AG04449 (cell line): ENCODE measurements at regions of chr6 and their contacts with region 1.

Region 1: DNA sequence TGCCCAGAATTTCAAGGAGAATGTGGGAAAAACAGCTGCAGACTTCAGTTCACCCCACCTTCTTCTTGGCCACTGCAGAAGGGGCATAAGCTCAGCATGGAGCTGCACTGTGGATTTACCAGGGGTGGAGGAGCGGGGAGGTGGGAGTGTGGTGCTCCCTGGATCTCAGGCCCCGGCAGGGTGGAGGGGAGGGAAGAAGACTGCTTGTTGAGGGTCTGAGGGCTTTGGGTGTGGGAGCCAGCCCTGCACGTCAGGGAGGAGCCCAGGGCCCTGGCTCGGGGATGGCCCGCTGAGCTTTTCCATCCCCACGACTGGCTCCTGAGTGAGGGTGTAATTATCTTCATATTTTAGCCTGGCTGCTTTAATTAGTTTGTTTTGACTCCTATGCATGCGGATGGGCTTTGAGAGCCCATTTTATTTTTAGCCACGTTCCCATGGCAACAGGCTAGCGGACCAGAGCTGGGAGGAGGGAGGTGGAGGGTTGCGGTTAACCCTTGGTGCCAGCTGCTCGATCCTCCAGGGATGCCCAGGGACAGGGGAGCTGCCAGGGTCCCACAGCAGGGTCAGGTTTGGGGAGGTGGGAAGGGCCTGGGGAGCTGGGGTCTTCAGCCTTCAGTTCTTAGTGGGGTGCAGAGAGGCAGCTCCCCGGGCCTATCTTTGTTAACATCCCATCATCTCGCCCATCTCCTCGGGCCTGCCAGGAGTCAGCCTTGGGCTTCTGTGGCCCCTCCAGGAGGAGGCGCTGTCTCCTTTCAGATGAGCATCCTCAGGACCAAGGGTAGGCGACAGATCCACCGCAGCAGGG is 68.2 kb downstream of the RAB44 start:
- DNase-seq: no peak
- H3K4me3 ChIP-seq: peak overlapping the region; percentile 20; the same call in 1 of the 2 replicates
- CTCF ChIP-seq: peak; percentile 97

Region 2: DNA sequence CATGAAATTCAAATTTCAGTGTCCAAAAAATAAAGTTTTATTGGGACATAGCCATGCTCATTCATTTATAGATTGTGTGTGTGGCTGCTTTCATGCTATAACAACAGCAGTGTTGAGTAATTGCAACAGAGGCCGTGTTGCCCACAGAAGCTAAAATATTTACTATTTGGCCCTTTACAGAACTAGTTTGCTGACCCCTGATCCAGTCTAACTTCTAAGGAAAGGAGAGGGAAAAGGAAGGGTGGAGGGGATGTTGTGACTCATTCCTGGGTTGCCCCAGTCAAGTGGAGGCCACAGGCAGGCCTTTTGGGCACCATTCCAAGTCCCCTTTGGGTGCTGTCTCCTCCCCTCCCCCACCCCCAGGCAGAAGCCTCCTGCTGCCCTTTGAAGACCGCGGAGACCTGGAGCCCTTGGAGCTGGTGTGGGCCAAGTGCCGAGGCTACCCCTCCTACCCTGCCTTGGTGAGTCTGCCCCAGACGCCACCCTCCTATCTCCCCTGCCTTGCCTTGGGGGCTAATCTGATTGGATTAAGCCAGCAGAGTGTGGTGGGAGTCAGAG is 540.8 kb before region 1 on chr6:
- CTCF ChIA-PET with region 1: no interaction called
- POLR2A ChIA-PET with region 1: no interaction called
- DNase-seq: no peak
- H3K4me3 ChIP-seq: no peak overlapping the region
- CTCF ChIP-seq: no peak

Region 3: DNA sequence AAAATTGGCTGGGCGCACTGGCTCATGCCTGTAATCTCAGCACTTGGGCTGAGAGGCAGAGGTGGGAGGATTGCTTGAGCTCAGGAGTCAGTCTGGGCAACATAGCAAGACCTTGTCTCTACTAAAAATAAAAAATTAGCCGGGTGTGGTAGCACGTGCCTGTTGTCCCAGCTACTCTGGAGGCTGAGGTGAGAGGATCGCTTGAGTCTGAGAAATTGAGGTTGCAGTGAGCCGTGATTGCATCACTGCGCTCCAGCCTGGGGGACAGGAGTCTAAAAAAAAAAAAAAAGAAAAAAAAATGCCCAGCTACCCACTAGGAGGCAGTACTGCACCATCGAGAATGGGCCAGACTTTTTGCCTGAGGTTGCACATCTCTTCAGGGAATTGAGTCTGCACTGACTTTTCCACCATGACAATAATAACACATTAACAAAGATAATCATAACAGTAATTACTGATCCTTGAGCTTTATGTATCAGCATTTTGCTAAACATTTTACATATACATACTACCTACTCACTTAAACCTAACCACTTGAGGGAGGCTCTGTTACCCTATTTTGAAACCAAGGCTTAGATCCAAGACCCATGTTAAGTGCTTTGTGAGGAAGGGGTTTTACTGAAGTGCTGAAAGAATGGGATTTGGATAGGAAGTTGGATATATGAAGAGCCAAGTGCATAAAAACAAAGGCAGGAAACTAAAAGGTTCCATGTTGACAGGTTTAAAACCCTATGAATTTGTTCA is 150.6 kb before region 1 on chr6:
- CTCF ChIA-PET with region 1: interaction called, 167 read pairs
- POLR2A ChIA-PET with region 1: interaction called, 7 read pairs
- DNase-seq: no peak
- H3K4me3 ChIP-seq: no peak overlapping the region
- CTCF ChIP-seq: peak; percentile 61

Region 4: DNA sequence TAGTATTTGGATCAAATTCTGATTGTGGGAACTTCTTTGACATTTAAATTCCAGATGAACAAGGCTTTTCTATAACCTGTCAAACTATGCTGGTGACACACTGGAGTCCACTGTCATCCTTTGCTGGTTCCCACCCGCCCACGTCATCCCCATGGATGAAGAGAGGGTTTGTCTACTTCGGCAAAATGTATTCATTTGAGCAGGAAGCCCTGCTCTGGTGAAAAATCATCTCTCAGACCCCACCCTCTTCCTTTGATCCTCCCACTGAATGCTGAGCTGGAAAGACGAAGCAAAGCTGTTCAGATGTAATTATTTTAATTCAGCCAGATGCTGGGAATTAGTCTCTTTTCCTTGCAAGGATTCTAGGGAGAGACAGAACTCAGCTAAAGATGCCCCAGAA is 23.0 kb after region 1 on chr6:
- CTCF ChIA-PET with region 1: interaction called, 252 read pairs
- POLR2A ChIA-PET with region 1: no interaction called
- DNase-seq: no peak
- H3K4me3 ChIP-seq: no peak overlapping the region
- CTCF ChIP-seq: no peak

Region 5: GRCh38 chr6:36865835-36866234 is 100.0 kb after region 1 on chr6:
- CTCF ChIA-PET with region 1: interaction called, 12 read pairs
- POLR2A ChIA-PET with region 1: no interaction called
- DNase-seq: no peak
- H3K4me3 ChIP-seq: no peak overlapping the region
- CTCF ChIP-seq: no peak

Region 6: DNA sequence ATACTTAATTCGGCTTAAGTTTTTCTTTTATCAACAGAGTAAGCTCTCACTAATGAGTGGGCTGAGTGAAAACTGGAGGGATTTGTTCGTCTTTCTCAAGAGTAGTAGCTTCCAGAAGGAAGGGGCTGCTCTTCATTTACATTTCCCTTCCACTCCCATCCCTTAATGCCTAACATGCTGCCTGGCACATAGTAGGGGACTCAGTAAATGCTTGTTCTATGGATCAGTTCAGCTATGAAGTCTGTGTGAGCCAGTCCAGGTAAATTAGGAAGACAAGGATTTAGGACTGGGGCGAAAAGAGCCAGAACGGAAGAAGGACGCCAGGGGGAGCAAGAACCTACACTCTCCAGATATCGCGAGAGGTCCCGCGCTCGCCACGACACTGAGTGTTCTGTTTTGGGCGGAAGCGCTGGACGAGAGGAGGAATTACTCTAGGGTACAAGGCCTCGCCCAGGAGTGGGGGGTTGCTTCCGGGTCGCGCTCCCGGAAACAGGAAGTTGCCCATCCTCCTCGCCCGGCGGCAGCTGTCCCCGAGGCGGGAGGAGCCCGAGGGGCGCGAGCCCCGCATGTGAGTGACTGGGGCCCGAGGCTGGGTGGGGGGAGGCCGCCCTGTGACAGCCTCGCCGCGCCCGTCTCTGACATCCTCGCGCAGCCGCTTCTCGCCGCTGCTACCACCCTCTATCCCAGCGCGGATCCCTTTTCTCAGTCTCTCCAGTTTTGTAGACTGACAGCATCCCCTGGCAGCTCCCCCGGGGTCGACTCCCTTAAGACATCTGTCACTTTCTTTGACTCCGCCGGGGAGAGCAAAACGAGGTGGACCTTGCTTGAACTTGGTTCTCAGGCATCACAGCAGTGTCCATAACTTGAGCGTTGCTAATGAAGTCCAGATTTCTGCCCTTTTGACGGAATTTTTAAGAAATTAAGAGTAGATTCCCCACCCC is 119.9 kb after region 1 on chr6 and contains the start of gene C6orf89:
- CTCF ChIA-PET with region 1: interaction called, 78 read pairs
- POLR2A ChIA-PET with region 1: no interaction called
- DNase-seq: peak; percentile 77
- H3K4me3 ChIP-seq: peak within 1 kb of the TSS; percentile 86
- CTCF ChIP-seq: peak; percentile 81

Region 7: GRCh38 chr6:36947570-36948351 is 182.0 kb after region 1 on chr6:
- CTCF ChIA-PET with region 1: no interaction called
- POLR2A ChIA-PET with region 1: no interaction called
- DNase-seq: no peak
- H3K4me3 ChIP-seq: no peak overlapping the region
- CTCF ChIP-seq: no peak

Region 8: DNA sequence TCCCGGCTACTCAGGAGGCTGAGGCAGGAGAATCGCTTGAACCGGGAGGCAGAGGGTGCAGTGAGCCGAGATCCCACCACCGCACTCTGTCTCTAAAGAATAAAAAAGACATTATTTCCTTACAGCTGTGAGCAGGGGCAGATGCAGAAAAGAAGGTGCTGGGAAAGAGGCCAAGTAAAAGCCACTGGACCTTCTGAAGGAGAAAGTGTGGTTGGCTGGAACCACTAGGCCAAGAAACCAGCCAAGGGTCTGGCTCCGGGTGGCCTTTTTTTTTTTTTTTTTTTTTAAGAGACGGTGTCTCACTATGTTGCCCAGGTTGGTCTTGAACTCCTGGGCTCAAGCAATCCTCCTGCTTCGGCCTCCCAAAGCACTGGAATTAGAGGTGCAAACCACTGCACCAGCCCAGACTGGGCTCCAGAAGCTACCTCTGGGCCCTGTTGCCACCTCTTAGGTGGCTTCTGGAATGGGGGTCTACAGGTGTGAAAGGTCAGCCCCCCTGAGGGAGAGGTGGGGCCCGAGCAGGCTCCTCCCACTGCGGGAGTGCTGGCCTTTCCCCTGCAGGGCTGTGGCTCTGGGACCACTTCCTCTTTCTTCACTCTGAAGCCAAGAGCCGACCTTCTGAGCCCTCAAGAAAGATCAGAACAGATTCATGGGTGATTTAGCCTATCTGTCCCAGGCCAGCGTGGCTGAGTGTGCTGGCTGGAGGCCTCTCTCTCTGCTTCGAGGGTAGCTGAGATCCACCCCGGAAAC is 239.4 kb after region 1 on chr6 and contains the start of gene FGD2:
- CTCF ChIA-PET with region 1: interaction called, 521 read pairs
- POLR2A ChIA-PET with region 1: no interaction called
- DNase-seq: no peak
- H3K4me3 ChIP-seq: no peak within 1 kb of the TSS
- CTCF ChIP-seq: no peak

Region 9: GRCh38 chr6:37207903-37208456 is 442.2 kb after region 1 on chr6:
- CTCF ChIA-PET with region 1: interaction called, 72 read pairs
- POLR2A ChIA-PET with region 1: no interaction called
- DNase-seq: no peak
- H3K4me3 ChIP-seq: no peak overlapping the region
- CTCF ChIP-seq: peak; percentile 84